Endothelial cell of umbilical vein (primary cell): ENCODE measurements at regions of chr6 and their contacts with region 1.

Region 1: DNA sequence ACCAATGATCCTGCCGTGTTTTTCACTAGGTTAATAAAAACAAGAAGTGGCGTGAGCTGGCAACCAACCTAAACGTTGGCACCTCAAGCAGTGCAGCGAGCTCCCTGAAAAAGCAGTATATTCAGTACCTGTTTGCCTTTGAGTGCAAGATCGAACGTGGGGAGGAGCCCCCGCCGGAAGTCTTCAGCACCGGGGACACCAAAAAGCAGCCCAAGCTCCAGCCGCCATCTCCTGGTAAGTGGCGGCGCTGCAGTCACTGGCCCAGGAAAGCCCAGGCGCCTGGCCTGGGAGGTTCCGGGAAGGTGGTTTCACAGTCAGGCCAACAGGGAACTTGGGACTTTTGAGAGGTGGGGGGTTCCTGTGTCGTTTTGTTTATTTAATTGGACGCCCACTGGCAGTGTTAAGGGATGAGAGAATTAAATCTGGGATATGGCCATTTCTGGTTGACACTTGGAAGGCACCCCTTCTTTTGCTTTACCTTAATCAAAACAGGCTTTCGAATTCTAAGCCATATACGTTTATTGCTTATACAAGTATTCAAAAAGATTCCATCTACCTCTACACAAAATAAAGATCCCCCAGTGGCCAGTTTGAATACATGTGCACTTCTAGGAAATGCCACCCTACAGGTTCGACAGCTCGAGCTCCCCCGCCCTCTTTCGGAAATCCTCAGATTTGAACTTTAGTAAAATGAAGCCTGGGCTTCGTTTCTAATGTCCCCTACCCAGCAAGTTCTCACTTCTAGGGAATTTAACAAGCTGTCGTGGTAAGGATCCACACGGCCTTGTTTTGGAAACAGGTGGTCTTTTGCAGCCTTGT is 138.9 kb downstream of the TMEM242 start:
- DNase-seq: peak; percentile 44
- H3K4me3 ChIP-seq: no peak overlapping the region
- H3K27ac ChIP-seq: no peak overlapping the region
- H3K4me1 ChIP-seq: no peaks in the 10 kb centered on the region
- H3K27me3 ChIP-seq: no peaks in the 10 kb centered on the region
- CTCF ChIP-seq: peak; percentile 82 to 89
- POLR2A ChIP-seq: no peak

Region 2: DNA sequence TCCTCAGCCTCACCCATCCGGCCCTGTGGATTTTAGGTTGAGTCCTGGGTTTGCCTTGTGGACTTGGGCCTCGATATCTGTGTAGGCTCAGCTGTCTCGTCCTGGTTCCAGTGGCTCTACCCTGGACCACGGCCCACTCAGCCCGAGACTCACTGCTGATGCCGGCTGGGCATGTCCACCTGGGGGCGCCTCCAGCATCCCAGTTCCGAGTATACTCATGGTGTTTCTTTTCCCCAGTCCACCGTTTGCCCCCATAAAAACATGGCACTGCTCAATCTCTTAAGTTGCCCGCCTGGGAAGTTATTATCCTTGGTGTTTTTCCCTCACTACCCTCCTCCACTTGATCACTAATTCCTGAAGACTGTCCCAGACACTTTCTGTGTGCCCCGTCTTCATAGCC is 308.1 kb before region 1 on chr6:
- CTCF ChIA-PET with region 1: no interaction called
- POLR2A ChIA-PET with region 1: no interaction called
- dilution Hi-C with region 1: no loop called
- intact Hi-C with region 1: loop called (anchors 1 kb)
- DNase-seq: no peak
- H3K4me3 ChIP-seq: no peak overlapping the region
- H3K27ac ChIP-seq: no peak overlapping the region
- H3K4me1 ChIP-seq: peaks cover 6% of the 10 kb centered on the region
- H3K27me3 ChIP-seq: no peaks in the 10 kb centered on the region
- CTCF ChIP-seq: peak; percentile 34 to 47
- POLR2A ChIP-seq: no peak

Region 3: GRCh38 chr6:156925718-156926615 is 258.4 kb before region 1 on chr6:
- CTCF ChIA-PET with region 1: no interaction called
- POLR2A ChIA-PET with region 1: no interaction called
- dilution Hi-C with region 1: no loop called
- intact Hi-C with region 1: no loop called
- DNase-seq: no peak
- H3K4me3 ChIP-seq: no peak overlapping the region
- H3K27ac ChIP-seq: no peak overlapping the region
- H3K4me1 ChIP-seq: no peaks in the 10 kb centered on the region
- H3K27me3 ChIP-seq: no peaks in the 10 kb centered on the region
- CTCF ChIP-seq: no peak
- POLR2A ChIP-seq: no peak

Region 4: GRCh38 chr6:157034436-157035230 is 149.8 kb before region 1 on chr6:
- CTCF ChIA-PET with region 1: interaction called, 28 read pairs
- POLR2A ChIA-PET with region 1: no interaction called
- dilution Hi-C with region 1: no loop called
- intact Hi-C with region 1: loop called (anchors 1 kb)
- DNase-seq: peak; percentile 65
- H3K4me3 ChIP-seq: no peak overlapping the region
- H3K27ac ChIP-seq: peak overlapping the region; percentile 16
- H3K4me1 ChIP-seq: peaks cover 8% of the 10 kb centered on the region
- H3K27me3 ChIP-seq: no peaks in the 10 kb centered on the region
- CTCF ChIP-seq: peak; percentile 50 to 54
- POLR2A ChIP-seq: no peak

Region 5: GRCh38 chr6:157143171-157143889 is 41.1 kb before region 1 on chr6:
- CTCF ChIA-PET with region 1: interaction called, 8 read pairs
- POLR2A ChIA-PET with region 1: no interaction called
- dilution Hi-C with region 1: no loop called
- intact Hi-C with region 1: loop called (anchors 2 kb)
- DNase-seq: peak; percentile 91
- H3K4me3 ChIP-seq: no peak overlapping the region
- H3K27ac ChIP-seq: peak overlapping the region; percentile 63
- H3K4me1 ChIP-seq: peaks cover 33% of the 10 kb centered on the region
- H3K27me3 ChIP-seq: no peaks in the 10 kb centered on the region
- CTCF ChIP-seq: no peak
- POLR2A ChIP-seq: no peak